BJ (cell line): ENCODE measurements at regions of chr3 and their contacts with region 1.

Region 1: DNA sequence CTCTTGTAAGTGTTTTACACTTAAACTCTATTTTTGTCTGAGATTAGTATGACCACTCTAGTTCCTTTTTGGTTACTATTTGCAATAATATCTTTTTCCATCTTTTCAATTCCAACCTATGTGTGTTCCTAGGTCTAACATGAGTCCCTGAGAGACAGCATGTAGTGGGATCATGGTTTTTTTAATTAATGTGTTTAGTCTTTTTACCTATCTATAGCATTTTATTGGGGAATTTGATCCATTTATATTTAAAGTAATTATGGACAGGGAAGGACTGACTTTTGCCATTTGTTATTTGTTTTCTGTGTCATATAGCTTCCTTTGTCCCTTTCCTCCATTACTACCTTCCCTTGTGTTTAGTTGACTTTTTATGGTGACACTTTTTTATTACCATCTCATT is 21.7 kb downstream of the TNFSF10 start:
- DNase-seq: no peak
- H3K4me3 ChIP-seq: no peak overlapping the region
- H3K27me3 ChIP-seq: 0 out of 2 replicates have a peak, but pooled peaks cover 2% of the 10 kb centered on the region
- CTCF ChIP-seq: no peak

Region 2: DNA sequence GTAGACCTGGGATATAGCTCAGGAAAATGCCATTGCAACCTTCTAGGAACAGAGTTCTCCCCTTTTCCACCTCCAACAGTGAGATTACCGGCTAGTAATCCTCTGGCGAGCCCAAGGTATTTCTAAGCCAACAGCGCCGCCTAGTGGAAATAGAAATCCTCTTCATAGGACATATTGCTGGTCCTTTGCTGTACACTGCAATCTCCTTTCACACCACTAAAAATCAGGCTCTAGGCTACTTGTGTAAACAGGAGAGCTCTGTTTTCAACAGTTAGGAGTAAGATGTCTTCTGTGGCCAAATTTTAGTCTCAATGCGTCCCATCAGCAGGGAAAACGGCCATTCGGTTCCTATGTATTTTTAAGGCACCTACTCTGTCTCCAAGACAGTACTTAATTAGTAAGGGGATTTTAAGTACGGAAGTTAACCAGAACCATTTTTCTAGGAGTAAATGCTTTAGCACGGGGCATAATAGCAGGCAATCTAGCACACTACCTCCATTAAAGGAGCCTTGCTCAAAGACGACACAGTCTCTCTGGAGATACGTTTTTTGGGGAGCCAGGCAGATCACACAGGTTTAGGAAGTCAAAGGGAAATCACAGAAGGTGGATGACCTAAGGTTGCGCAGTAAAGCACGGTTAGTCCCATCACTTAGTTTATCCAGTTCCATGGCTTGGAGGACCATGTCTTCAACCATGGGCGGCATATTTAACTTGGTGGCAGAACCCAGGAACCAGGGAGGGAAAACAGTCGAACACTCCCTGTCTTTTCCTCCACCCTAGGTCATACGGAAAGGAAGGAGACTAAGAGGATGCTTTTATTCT is 165.5 kb after region 1 on chr3:
- CTCF ChIA-PET with region 1: interaction called, 13 read pairs
- POLR2A ChIA-PET with region 1: no interaction called
- DNase-seq: no peak
- H3K4me3 ChIP-seq: no peak overlapping the region
- H3K27me3 ChIP-seq: no peaks in the 10 kb centered on the region
- CTCF ChIP-seq: peak; percentile 79